Transverse colon (tissue), 4 donors: ENCODE measurements at regions of chrX and their contacts with region 1.

Region 1: GRCh38 chrX:53714580-53715345 is 28.2 kb upstream of the HUWE1 start:
- DNase-seq: peak; percentile 14
- H3K4me3 ChIP-seq: no peak overlapping the region
- H3K27ac ChIP-seq: peak overlapping the region in 1 of 4 donors; percentile 21
- H3K4me1 ChIP-seq: no peaks in the 10 kb centered on the region
- H3K27me3 ChIP-seq: no peaks in the 10 kb centered on the region
- CTCF ChIP-seq: no peak
- EP300 ChIP-seq: no peak
- POLR2A ChIP-seq: no peak

Region 2: GRCh38 chrX:53284684-53285447 is 429.9 kb before region 1 on chrX:
- in situ Hi-C with region 1: no loop called
- intact Hi-C with region 1: no loop called
- DNase-seq: peak; percentile 71
- H3K4me3 ChIP-seq: no peak overlapping the region
- H3K27ac ChIP-seq: no peak overlapping the region
- H3K4me1 ChIP-seq: peaks cover 12 to 61% (median 31%) of the 10 kb centered on the region in 4 donors
- H3K27me3 ChIP-seq: no peaks in the 10 kb centered on the region
- CTCF ChIP-seq: peak; percentile 56 to 82 (median 68)
- EP300 ChIP-seq: no peak
- POLR2A ChIP-seq: no peak

Region 3: DNA sequence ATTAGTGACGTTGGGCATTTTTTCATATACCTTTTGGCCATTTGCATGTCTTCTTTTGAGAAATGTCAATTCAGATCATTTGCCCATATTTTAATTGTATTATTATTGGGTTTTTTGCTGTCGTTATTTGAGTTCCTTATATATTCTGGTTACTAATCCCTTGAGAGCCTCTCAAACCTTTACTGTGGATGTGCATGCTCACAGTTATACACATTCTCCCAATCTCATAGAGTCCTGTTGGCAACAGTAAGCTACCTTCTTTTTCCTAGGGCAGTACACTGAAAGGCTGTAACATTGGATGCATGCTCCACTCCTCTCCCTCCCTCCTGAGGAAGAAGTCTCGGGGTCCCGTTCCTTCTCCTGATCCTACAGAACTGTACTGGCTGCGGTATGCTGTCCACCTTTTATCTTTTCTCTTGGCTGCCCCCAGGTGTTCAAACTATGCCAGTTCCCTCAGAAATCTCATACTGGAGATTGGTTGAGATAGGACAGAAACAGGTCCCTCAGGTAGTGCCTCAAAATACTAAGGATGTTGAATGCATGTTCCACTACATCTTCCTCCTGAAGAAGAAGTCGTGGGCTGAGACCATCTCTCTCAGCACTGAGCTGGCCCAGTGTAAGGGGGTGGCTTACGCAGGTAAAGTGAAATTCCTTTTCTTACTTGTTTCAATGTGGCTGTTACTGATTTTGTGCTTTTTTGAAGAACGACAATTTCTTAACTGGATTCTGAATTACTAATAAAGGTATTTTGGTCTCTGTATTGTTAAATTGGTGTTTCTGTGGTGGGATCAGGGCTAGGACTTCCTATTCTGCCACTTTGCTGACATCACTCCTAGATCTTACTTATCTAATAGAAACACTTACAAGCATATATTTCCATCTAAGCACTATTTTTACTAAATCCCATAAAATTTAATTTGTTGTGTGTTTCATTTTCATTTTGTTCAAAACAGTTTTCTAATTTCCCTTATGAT is 117.2 kb after region 1 on chrX:
- in situ Hi-C with region 1: loop called in 1 of 4 experiments (anchors 25 kb)
- intact Hi-C with region 1: no loop called
- DNase-seq: peak; percentile 33
- H3K4me3 ChIP-seq: no peak overlapping the region
- H3K27ac ChIP-seq: no peak overlapping the region
- H3K4me1 ChIP-seq: no peaks in the 10 kb centered on the region
- H3K27me3 ChIP-seq: no peaks in the 10 kb centered on the region
- CTCF ChIP-seq: peak in 2 of 5 experiments; percentile 16 to 19
- EP300 ChIP-seq: no peak
- POLR2A ChIP-seq: no peak

Region 4: GRCh38 chrX:54007682-54008081 is 292.9 kb after region 1 on chrX:
- in situ Hi-C with region 1: no loop called
- intact Hi-C with region 1: no loop called
- DNase-seq: no peak
- H3K4me3 ChIP-seq: no peak overlapping the region
- H3K27ac ChIP-seq: no peak overlapping the region
- H3K4me1 ChIP-seq: no peaks in the 10 kb centered on the region
- H3K27me3 ChIP-seq: no peaks in the 10 kb centered on the region
- CTCF ChIP-seq: no peak
- EP300 ChIP-seq: no peak
- POLR2A ChIP-seq: no peak